ENCODE measurements at regions of chr18 and their contacts with region 1.

Region 1: DNA sequence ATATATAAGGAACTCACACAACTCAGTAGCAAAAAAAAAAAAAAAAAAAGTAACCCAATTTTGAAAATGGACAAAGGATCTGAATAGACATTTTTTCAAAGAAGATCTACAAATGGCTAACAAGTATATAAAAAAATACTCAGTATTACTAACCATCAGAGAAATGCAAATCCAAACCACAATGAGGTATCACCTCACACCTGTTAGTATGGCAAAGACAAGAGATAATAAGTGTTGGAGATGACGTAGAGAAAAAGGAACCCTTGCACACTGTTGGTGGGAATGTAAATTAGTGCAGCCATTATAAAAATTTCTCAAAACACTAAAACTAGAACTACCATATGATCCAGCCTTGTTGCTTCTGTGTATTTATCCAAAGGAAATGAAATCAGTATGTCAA is 5.8 kb upstream of the CNDP1 start:
- DNase-seq: no peak
- ATAC-seq: no peak
- H3K4me3 ChIP-seq: no peak overlapping the region
- H3K4me3 Mint-ChIP-seq: no peak overlapping the region
- H3K27ac ChIP-seq: no peak overlapping the region
- H3K27ac Mint-ChIP-seq: no peak overlapping the region
- H3K4me1 ChIP-seq: no peaks in the 10 kb centered on the region
- H3K4me1 Mint-ChIP-seq: no peaks in the 10 kb centered on the region
- H3K27me3 ChIP-seq: peaks cover 0 to 2% of the 10 kb centered on the region in 2 experiments
- H3K27me3 Mint-ChIP-seq: peaks cover 10% of the 10 kb centered on the region
- CTCF ChIP-seq: no peak

Region 2: GRCh38 chr18:74571578-74572287 is 43.3 kb after region 1 on chr18:
- CTCF ChIA-PET with region 1: no interaction called
- POLR2A ChIA-PET with region 1: no interaction called
- intact Hi-C with region 1: loop called in 1 of 2 experiments (anchors 5 kb)
- DNase-seq: no peak
- ATAC-seq: no peak
- H3K4me3 ChIP-seq: no peak overlapping the region
- H3K4me3 Mint-ChIP-seq: no peak overlapping the region
- H3K27ac ChIP-seq: no peak overlapping the region
- H3K27ac Mint-ChIP-seq: no peak overlapping the region
- H3K4me1 ChIP-seq: no peaks in the 10 kb centered on the region
- H3K4me1 Mint-ChIP-seq: no peaks in the 10 kb centered on the region
- H3K27me3 ChIP-seq: peaks cover 4 to 6% of the 10 kb centered on the region in 2 experiments
- H3K27me3 Mint-ChIP-seq: peaks cover 28% of the 10 kb centered on the region
- CTCF ChIP-seq: no peak

Measured in CD4-positive, alpha-beta T cell (primary cell).